ENCODE measurements at regions of chr12 and their contacts with region 1.

Region 1: GRCh38 chr12:106357549-106358395 is at the start of gene POLR3B:
- DNase-seq: peak; percentile 94
- H3K4me3 Mint-ChIP-seq: peak within 1 kb of the TSS; percentile 91
- H3K27ac Mint-ChIP-seq: peak within 1 kb of the TSS; percentile 90
- H3K4me1 Mint-ChIP-seq: peaks cover 12% of the 10 kb centered on the region
- H3K27me3 Mint-ChIP-seq: no peaks in the 10 kb centered on the region
- total RNA-seq, gene POLR3B: 8.7 and 8.9 TPM in 2 replicates

Region 2: DNA sequence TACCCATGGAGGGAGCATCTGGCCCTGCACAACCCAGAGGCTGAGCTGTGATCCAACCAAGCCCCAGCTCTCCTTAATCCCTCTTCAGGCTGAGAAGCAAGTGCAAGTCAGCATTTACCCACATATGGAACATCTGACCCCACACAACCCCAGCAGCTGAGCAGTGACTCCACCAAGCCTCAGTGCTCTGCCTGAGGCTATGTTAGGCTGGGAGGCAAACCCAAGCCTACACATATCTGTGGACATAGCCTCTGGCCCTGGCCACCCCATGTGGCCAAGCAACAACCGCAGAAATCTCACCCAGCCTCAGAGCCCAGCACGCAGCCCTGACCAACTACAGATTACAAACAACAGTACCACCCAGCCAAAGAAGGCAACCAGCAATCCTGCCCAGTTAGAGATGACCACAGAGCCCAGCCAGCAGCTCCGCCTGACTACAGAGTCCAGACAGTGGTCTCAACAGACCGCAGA is 361.8 kb before region 1 on chr12:
- intact Hi-C with region 1: no loop called
- DNase-seq: no peak
- H3K4me3 Mint-ChIP-seq: no peak overlapping the region
- H3K27ac Mint-ChIP-seq: no peak overlapping the region
- H3K4me1 Mint-ChIP-seq: no peaks in the 10 kb centered on the region
- H3K27me3 Mint-ChIP-seq: peaks cover 13% of the 10 kb centered on the region

Region 3: GRCh38 chr12:106223485-106224354 is 134.1 kb before region 1 on chr12:
- intact Hi-C with region 1: loop called (anchors 5 kb)
- DNase-seq: peak; percentile 65
- H3K4me3 Mint-ChIP-seq: no peak overlapping the region
- H3K27ac Mint-ChIP-seq: no peak overlapping the region
- H3K4me1 Mint-ChIP-seq: peaks cover 21% of the 10 kb centered on the region
- H3K27me3 Mint-ChIP-seq: peaks cover 6% of the 10 kb centered on the region

Region 4: GRCh38 chr12:106302401-106303201 is 55.2 kb before region 1 on chr12 and contains the start of gene TCP11L2:
- intact Hi-C with region 1: loop called (anchors 2 kb)
- DNase-seq: peak; percentile 83
- H3K4me3 Mint-ChIP-seq: peak within 1 kb of the TSS; percentile 94
- H3K27ac Mint-ChIP-seq: peak within 1 kb of the TSS; percentile 100
- H3K4me1 Mint-ChIP-seq: peaks cover 37% of the 10 kb centered on the region
- H3K27me3 Mint-ChIP-seq: no peaks in the 10 kb centered on the region
- total RNA-seq, gene TCP11L2: 4.8 and 5.1 TPM in 2 replicates

Region 5: DNA sequence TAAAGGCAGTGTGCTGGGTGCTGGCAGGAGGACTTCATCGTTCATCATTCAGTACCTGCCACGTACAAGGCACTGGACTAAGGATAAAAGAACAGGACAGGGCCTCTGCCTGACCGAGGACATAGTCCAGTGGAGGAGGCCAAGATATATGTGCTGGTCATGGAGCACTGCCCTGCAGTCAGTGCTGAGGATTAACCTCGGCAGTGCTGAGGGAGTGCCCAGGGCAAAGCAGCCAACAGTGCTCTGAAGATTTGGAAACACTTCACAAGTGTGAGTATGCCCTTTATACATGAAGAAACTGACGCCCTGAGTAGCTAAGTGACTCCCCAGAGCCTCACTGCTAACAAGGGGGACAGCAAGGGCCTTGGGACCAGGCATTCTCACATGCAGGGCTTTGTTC is 153.6 kb after region 1 on chr12:
- intact Hi-C with region 1: no loop called
- DNase-seq: no peak
- H3K4me3 Mint-ChIP-seq: no peak overlapping the region
- H3K27ac Mint-ChIP-seq: no peak overlapping the region
- H3K4me1 Mint-ChIP-seq: no peaks in the 10 kb centered on the region
- H3K27me3 Mint-ChIP-seq: no peaks in the 10 kb centered on the region

Region 6: DNA sequence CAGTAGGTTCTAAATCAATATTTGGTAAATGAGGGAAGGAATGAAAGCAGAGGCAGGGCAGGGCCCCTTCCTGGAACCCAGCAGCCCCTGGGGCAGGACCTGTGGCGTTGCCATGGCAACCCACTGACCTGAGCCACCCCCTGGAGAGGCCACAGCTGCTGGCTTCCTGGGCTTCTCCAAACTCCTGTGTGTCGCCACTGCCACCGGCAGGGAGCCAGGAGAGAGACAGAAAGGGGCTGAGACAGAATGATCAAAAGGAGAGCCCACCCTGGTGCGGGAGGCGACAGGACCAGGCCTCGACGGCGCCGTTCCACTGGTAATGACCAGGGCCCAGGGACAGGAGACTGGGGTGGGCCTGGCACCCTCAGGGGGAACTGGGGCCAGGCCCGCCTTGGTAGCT is 243.3 kb after region 1 on chr12:
- intact Hi-C with region 1: no loop called
- DNase-seq: no peak
- H3K4me3 Mint-ChIP-seq: no peak overlapping the region
- H3K27ac Mint-ChIP-seq: no peak overlapping the region
- H3K4me1 Mint-ChIP-seq: no peaks in the 10 kb centered on the region
- H3K27me3 Mint-ChIP-seq: peaks cover 21% of the 10 kb centered on the region

Region 7: GRCh38 chr12:106910202-106910601 is 552.4 kb after region 1 on chr12:
- intact Hi-C with region 1: loop called (anchors 2 kb)
- DNase-seq: no peak
- H3K4me3 Mint-ChIP-seq: no peak overlapping the region
- H3K27ac Mint-ChIP-seq: no peak overlapping the region
- H3K4me1 Mint-ChIP-seq: peaks cover 37% of the 10 kb centered on the region
- H3K27me3 Mint-ChIP-seq: peaks cover under 1% of the 10 kb centered on the region

Region 8: DNA sequence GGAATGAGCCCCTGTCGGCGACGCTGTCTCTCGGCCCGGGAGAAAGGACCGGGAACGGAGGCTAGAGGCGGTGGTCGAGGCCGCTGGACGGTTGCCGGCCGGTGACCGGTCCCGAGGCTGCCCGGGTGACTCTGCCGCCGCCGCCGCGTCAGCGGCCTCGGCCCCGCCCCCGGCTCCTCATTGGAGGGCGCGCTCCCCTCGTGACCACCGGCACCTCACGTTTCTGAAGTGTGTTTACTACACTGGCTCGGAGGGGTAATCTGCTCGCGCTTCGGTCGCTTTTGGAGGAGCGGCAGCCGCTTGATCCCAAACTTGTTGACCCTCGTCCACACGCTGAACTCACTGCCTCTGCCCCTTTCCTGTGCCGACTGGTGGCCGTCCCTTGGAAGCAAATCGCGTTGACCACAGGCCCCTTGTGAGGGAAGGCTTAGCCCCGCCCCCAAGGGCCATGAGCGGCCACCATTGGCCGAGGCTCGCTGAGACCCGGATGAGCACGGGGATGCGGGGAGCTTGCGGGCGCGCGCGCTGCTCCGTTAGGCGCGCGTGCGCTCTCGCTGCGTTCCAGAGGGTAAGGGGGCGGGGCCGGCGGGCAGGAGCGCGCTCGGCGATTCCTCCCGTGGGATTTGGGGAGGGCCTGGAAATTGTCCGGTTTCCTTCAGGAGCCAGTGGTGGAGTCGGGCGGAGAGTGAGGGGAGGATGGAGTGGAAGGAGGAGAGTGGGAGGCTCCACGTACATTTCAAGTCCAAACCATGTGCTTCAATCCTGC is 735.8 kb after region 1 on chr12 and contains the start of gene CRY1:
- intact Hi-C with region 1: loop called (anchors 1 kb)
- DNase-seq: peak; percentile 92
- H3K4me3 Mint-ChIP-seq: no peak within 1 kb of the TSS
- H3K27ac Mint-ChIP-seq: peak within 1 kb of the TSS; percentile 60
- H3K4me1 Mint-ChIP-seq: peaks cover 2% of the 10 kb centered on the region
- H3K27me3 Mint-ChIP-seq: peaks cover 10% of the 10 kb centered on the region
- total RNA-seq, gene CRY1: 25.4 and 26.0 TPM in 2 replicates

Measured in activated T-helper 2 cell treated with anti-CD3 and anti-CD28 coated beads, Interferon-gamma antibody, Interleukin-2, Interleukin-4, amounts not matched to agents 10 μg/mL and 5 μg/mL and 100 μg/mL, durations not matched to agents 14 hours and 24 hours and 36 hours (primary cell).